Ovary (tissue), 10 donors: ENCODE measurements at regions of chr1 and their contacts with region 1.

Region 1: GRCh38 chr1:156445789-156446263 is 54.7 kb downstream of the MEF2D start:
- DNase-seq: peak; percentile 66 to 87 (median 82)
- H3K4me3 ChIP-seq: no peak overlapping the region
- H3K27ac ChIP-seq: no peak overlapping the region
- H3K4me1 ChIP-seq: no peaks in the 10 kb centered on the region
- H3K27me3 ChIP-seq: no peaks in the 10 kb centered on the region
- CTCF ChIP-seq: peak; percentile 81 to 84 (median 82)
- EP300 ChIP-seq: no peak
- POLR2A ChIP-seq: no peak

Region 2: DNA sequence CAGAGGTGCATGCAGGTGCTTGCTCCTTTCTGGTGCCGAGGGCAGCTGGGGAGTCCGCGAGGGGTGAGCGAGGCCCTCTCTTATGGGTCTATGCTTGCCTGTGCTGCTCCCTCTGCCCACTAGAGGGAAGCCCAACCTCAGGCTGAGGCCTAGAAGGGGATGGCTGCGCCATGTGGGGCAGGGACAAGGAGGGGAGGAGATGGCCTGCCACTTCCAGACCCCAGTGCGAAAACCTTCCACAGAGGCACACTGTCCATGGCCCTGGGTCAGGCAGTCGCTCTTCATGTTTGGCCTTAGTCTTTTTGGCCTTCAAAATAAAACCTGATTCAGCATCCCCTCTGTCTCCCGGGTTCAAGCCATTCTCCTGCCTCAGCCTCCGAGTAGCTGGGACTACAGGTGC is 62.8 kb before region 1 on chr1:
- intact Hi-C with region 1: loop called (anchors 2 to 10 kb)
- DNase-seq: peak in 3 of 5 donors; percentile 35 to 57 (median 49)
- H3K4me3 ChIP-seq: no peak overlapping the region
- H3K27ac ChIP-seq: no peak overlapping the region
- H3K4me1 ChIP-seq: peaks cover 3% of the 10 kb centered on the region
- H3K27me3 ChIP-seq: no peaks in the 10 kb centered on the region
- CTCF ChIP-seq: no peak
- EP300 ChIP-seq: no peak
- POLR2A ChIP-seq: no peak